CD8-positive, alpha-beta T cell (primary cell): ENCODE measurements at regions of chr16 and their contacts with region 1.

Region 1: GRCh38 chr16:31142109-31143010 is 6.8 kb upstream of the PRSS8 start:
- DNase-seq: peak; percentile 90 to 98 (median 95)
- ATAC-seq: peak; percentile 91
- H3K4me3 ChIP-seq: peak overlapping the region; percentile 35 to 66
- H3K4me3 Mint-ChIP-seq: peak overlapping the region; percentile 69
- H3K27ac ChIP-seq: peak overlapping the region; percentile 42 to 67
- H3K27ac Mint-ChIP-seq: peak overlapping the region; percentile 77
- H3K4me1 ChIP-seq: peaks cover 16% of the 10 kb centered on the region
- H3K4me1 Mint-ChIP-seq: peaks cover 14% of the 10 kb centered on the region
- H3K27me3 ChIP-seq: no peaks in the 10 kb centered on the region
- H3K27me3 Mint-ChIP-seq: no peaks in the 10 kb centered on the region
- CTCF ChIP-seq: peak; percentile 84

Region 2: DNA sequence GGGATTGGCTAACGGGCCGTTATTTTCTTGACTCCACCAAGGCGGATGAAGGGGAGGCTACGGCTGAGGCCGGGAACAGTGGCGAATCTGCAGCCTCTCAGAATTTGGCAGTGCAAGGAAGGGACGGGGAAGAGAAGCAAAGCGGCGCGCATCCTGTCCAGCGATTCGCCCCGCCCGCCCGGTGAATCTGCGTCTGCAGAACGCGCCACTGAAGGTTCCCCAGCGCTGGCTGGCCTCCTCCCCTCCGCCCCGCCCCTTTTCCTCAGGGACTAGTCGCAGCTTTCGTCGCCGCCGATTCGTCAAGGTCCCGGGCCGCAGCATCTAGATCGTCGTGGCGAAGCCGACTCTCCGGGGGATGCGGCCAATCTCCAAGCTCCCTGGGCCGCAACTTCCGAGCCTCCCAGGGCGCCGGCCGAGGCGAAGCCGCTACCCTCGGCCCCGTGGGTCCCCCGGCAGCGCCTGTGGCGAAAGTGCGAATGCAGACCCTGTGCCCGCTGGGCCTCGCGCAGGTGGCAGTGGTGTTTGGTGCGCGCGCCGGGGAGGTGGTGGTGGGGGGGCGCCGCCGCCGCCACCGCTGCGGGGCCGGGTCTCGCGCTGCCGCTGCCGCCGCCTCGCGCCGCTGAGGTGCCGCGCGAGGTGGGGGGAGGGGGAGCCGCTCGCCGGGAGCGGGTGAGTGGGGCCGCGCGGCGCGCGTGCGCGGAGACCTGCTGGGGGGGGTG is 184.7 kb before region 1 on chr16 and contains the start of gene SETD1A:
- CTCF ChIA-PET with region 1: interaction called, 6 read pairs
- POLR2A ChIA-PET with region 1: interaction called, 4 read pairs
- intact Hi-C with region 1: loop called (anchors 1 to 10 kb)
- DNase-seq: peak; percentile 91 to 99 (median 98)
- ATAC-seq: peak; percentile 86
- H3K4me3 ChIP-seq: peak within 1 kb of the TSS; percentile 88 to 97
- H3K4me3 Mint-ChIP-seq: peak within 1 kb of the TSS; percentile 95
- H3K27ac ChIP-seq: peak within 1 kb of the TSS; percentile 93 to 98
- H3K27ac Mint-ChIP-seq: peak within 1 kb of the TSS; percentile 98
- H3K4me1 ChIP-seq: peaks cover 27% of the 10 kb centered on the region
- H3K4me1 Mint-ChIP-seq: peaks cover 31% of the 10 kb centered on the region
- H3K27me3 ChIP-seq: no peaks in the 10 kb centered on the region
- H3K27me3 Mint-ChIP-seq: no peaks in the 10 kb centered on the region
- CTCF ChIP-seq: no peak
- total RNA-seq, gene SETD1A: 43.6 to 48.3 TPM

Region 3: GRCh38 chr16:31032736-31033708 is 109.3 kb before region 1 on chr16 and contains the start of gene STX4:
- CTCF ChIA-PET with region 1: interaction called, 3 read pairs
- POLR2A ChIA-PET with region 1: interaction called, 5 read pairs
- intact Hi-C with region 1: loop called in 1 of 2 experiments (anchors 1 kb)
- DNase-seq: peak; percentile 93 to 100 (median 97)
- ATAC-seq: peak; percentile 73
- H3K4me3 ChIP-seq: peak within 1 kb of the TSS; percentile 84 to 88
- H3K4me3 Mint-ChIP-seq: peak within 1 kb of the TSS; percentile 98
- H3K27ac ChIP-seq: peak within 1 kb of the TSS; percentile 98 to 99
- H3K27ac Mint-ChIP-seq: peak within 1 kb of the TSS; percentile 99
- H3K4me1 ChIP-seq: peaks cover 18% of the 10 kb centered on the region
- H3K4me1 Mint-ChIP-seq: peaks cover 28% of the 10 kb centered on the region
- H3K27me3 ChIP-seq: no peaks in the 10 kb centered on the region
- H3K27me3 Mint-ChIP-seq: no peaks in the 10 kb centered on the region
- CTCF ChIP-seq: no peak
- total RNA-seq, gene STX4: 63.8 to 69.9 TPM

Region 4: GRCh38 chr16:31044190-31044481 is 98.2 kb before region 1 on chr16:
- CTCF ChIA-PET with region 1: no interaction called
- POLR2A ChIA-PET with region 1: no interaction called
- intact Hi-C with region 1: no loop called
- DNase-seq: no peak
- ATAC-seq: no peak
- H3K4me3 ChIP-seq: no peak overlapping the region
- H3K4me3 Mint-ChIP-seq: no peak overlapping the region
- H3K27ac ChIP-seq: no peak overlapping the region
- H3K27ac Mint-ChIP-seq: no peak overlapping the region
- H3K4me1 ChIP-seq: no peaks in the 10 kb centered on the region
- H3K4me1 Mint-ChIP-seq: no peaks in the 10 kb centered on the region
- H3K27me3 ChIP-seq: no peaks in the 10 kb centered on the region
- H3K27me3 Mint-ChIP-seq: no peaks in the 10 kb centered on the region
- CTCF ChIP-seq: no peak

Region 5: GRCh38 chr16:31108035-31108793 is 34.1 kb before region 1 on chr16 and contains the start of gene BCKDK:
- CTCF ChIA-PET with region 1: interaction called, 4 read pairs
- POLR2A ChIA-PET with region 1: interaction called, 4 read pairs
- intact Hi-C with region 1: loop called (anchors 2 to 5 kb)
- DNase-seq: peak; percentile 9 to 76 (median 58)
- ATAC-seq: peak; percentile 67
- H3K4me3 ChIP-seq: peak within 1 kb of the TSS; percentile 50 to 96
- H3K4me3 Mint-ChIP-seq: peak within 1 kb of the TSS; percentile 87
- H3K27ac ChIP-seq: peak within 1 kb of the TSS; percentile 54 to 64
- H3K27ac Mint-ChIP-seq: peak within 1 kb of the TSS; percentile 84
- H3K4me1 ChIP-seq: peaks cover 15% of the 10 kb centered on the region
- H3K4me1 Mint-ChIP-seq: peaks cover 17% of the 10 kb centered on the region
- H3K27me3 ChIP-seq: no peaks in the 10 kb centered on the region
- H3K27me3 Mint-ChIP-seq: no peaks in the 10 kb centered on the region
- CTCF ChIP-seq: no peak
- total RNA-seq, gene BCKDK: 5.6 to 7.6 TPM

Region 6: DNA sequence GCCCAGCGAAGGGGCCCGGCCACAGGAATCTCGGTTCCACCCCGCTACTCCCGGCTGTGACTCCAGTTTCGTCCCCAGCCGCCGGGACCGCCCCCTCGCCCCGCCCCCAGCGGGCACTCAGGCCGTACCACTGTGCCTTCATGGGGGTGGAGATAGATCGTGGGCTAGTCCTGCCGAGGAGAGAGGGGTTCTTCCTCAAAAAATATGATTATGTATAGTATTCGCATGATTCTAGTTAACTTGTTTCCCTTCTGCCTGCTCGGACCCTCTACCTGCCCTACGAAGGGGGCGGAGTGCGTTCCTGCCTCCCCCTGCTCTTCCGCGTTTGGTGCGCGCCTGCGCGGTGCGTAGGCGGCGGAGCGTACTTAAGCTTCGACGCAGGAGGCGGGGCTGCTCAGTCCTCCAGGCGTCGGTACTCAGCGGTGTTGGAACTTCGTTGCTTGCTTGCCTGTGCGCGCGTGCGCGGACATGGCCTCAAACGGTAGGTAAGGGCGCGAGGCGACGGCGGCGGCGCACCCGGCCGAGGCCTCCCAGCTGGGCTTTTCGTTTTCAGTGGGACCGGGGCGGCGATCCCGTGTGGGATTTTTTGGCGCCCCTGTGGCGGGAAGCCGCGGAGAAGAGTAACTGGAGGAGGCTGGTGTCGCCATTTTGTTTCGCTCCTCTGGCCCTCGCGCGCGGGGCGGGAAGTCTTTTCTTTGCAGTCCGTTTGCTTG is 37.5 kb after region 1 on chr16 and contains the start of gene FUS:
- CTCF ChIA-PET with region 1: interaction called, 17 read pairs
- POLR2A ChIA-PET with region 1: interaction called, 85 read pairs
- intact Hi-C with region 1: loop called (anchors 1 to 5 kb)
- DNase-seq: peak; percentile 86 to 97 (median 90)
- ATAC-seq: peak; percentile 73
- H3K4me3 ChIP-seq: peak within 1 kb of the TSS; percentile 80 to 90
- H3K4me3 Mint-ChIP-seq: peak within 1 kb of the TSS; percentile 98
- H3K27ac ChIP-seq: peak within 1 kb of the TSS; percentile 88 to 95
- H3K27ac Mint-ChIP-seq: peak within 1 kb of the TSS; percentile 99
- H3K4me1 ChIP-seq: peaks cover 63% of the 10 kb centered on the region
- H3K4me1 Mint-ChIP-seq: peaks cover 60% of the 10 kb centered on the region
- H3K27me3 ChIP-seq: no peaks in the 10 kb centered on the region
- H3K27me3 Mint-ChIP-seq: no peaks in the 10 kb centered on the region
- CTCF ChIP-seq: no peak
- total RNA-seq, gene FUS: 734 to 742 TPM

Region 7: DNA sequence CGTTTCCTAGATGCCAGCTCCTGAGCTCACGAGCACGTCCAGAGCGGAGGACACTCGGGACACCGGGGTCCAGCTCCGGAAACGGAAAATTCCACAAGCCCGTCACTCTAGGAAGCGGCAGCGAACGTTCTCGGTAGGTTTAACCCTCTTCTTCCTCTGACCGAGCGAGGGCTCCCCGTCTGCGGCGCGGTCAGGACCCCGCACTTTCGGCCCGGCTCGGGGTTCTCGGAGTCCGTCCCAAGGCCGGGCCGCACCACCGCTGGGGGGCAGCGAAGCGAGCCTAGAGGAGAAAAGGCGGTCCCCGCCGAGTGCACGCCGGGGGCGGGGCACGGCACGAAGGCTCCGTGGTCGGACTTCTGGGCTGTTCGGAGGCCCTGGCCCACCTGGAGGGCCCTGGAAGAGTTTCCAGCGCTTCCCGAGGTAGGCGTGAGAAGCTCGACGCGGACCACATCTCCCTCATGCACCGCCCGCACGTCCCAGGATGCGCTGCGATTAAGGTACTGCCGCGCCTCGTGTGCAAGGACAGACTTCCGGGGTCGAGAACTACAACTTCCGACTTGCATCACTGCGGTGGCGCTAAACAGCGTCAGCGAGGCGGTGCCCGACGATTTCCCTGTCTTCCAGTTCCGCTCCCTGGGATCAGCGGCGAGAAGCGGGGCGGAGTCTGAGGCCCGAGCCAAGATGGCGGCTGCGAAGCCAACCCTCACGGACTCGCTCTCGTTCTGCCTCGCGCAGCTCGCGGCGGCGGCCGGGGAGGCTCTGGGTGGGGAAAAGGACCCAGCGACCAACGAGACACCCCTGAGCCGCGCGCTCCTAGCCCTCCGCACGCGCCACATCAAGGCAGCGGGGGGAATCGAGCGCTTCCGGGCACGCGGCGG is 316.7 kb after region 1 on chr16 and contains the start of gene ARMC5:
- CTCF ChIA-PET with region 1: interaction called, 5 read pairs
- POLR2A ChIA-PET with region 1: interaction called, 15 read pairs
- intact Hi-C with region 1: loop called in 1 of 2 experiments (anchors 5 kb)
- DNase-seq: peak; percentile 91 to 99 (median 96)
- ATAC-seq: peak; percentile 69
- H3K4me3 ChIP-seq: peak within 1 kb of the TSS; percentile 73 to 99
- H3K4me3 Mint-ChIP-seq: peak within 1 kb of the TSS; percentile 95
- H3K27ac ChIP-seq: peak within 1 kb of the TSS; percentile 97 to 100
- H3K27ac Mint-ChIP-seq: peak within 1 kb of the TSS; percentile 99
- H3K4me1 ChIP-seq: peaks cover 40% of the 10 kb centered on the region
- H3K4me1 Mint-ChIP-seq: peaks cover 50% of the 10 kb centered on the region
- H3K27me3 ChIP-seq: no peaks in the 10 kb centered on the region
- H3K27me3 Mint-ChIP-seq: no peaks in the 10 kb centered on the region
- CTCF ChIP-seq: peak; percentile 44
- total RNA-seq, gene ARMC5: 22.4 to 24.0 TPM